ENCODE measurements at regions of chr11 and their contacts with region 1.

Region 1: DNA sequence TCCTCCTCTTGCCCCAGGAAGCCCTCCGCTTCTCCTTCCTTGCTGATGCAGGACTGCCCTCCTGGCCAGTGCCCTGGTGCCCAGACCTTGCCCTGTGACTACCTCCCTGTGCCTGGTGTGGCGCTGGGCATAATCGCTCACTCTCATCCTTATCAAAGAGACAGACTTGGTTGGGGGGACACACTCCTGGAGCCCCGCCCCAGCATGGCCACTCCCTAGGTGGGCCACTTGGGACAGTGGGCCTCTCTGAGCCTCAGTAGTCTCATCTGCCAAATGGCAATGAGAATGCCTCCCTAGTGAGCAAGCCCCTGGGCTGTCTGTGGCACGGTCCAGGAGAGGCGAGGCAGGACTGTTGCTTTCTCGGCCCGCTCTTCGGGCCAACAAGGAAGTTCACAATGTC is 72.7 kb upstream of the TSPAN18 start:
- DNase-seq: no peak
- ATAC-seq: no peak
- H3K4me3 ChIP-seq: no peak overlapping the region
- H3K27ac ChIP-seq: no peak overlapping the region
- H3K4me1 ChIP-seq: no peaks in the 10 kb centered on the region
- H3K27me3 ChIP-seq: peaks cover 11% of the 10 kb centered on the region
- CTCF ChIP-seq: no peak

Region 2: DNA sequence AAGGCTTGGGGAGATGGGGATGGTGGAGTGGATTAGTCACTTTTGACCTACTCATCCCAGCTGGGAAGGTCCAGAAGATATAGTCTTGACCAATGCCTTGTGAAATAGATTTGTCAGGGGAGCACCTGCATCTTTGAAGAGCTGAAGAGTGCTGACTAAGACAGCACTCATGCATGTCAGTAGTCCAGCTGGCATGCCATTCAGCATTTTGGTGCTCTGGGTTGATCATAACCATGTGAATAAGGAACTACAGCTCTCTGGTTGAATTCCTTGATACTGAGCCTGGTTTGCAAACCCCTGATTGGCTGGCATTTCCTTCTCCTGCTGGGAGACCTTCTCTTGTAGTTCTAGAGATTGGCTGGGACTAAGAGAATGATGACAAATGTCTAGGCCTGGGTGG is 237.3 kb before region 1 on chr11:
- CTCF ChIA-PET with region 1: no interaction called
- POLR2A ChIA-PET with region 1: no interaction called
- in situ Hi-C with region 1: no loop called
- intact Hi-C with region 1: no loop called
- DNase-seq: no peak
- ATAC-seq: no peak
- H3K4me3 ChIP-seq: no peak overlapping the region
- H3K27ac ChIP-seq: no peak overlapping the region
- H3K4me1 ChIP-seq: no peaks in the 10 kb centered on the region
- H3K27me3 ChIP-seq: peaks cover 6% of the 10 kb centered on the region; the same call in 1 of the 2 replicates
- CTCF ChIP-seq: no peak

Region 3: DNA sequence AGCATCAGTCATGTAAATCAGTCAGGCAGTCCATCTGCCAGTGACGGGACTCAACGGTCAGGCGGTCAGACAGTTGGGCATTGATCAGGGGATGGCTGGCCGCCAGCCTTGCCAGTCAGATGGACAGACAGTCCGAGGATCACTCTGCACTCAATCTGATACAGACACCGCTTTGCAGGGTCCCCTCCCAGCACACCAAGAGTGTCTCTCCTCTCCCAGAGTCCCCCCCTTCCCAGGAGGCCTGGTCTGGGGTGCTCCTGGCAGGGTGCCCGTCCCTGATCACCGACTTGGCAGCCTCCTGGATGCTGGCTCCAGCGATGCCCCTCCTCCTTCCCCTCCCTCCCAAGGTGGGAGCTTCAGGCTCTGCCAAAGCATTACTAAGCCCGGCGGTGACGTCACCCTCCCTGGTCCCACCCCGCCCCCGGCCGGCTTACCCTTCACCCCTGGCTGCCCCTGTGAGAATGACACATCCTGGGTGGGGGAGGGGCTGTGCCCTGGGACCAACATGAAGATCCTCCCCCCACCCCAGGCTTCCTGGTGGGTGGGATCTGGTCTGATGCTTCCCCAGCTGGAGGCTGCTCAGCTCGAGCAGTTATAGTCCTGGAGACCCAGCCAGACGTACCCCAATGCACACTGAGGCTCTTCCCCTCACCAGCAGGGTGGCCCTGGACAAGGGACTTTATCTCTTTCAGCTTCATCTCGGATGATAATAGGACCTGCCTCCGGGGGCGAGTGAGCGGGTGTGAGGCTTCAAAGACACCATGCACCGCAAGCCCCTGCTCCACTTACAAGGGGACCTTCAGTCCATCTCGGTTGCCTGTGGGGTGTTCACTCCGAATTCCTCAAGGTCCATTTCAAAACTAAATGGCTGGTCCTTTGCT is 19.4 kb before region 1 on chr11:
- CTCF ChIA-PET with region 1: interaction called, 12 read pairs
- POLR2A ChIA-PET with region 1: no interaction called
- in situ Hi-C with region 1: no loop called
- intact Hi-C with region 1: no loop called
- DNase-seq: no peak
- ATAC-seq: no peak; the same call in 1 of the 2 replicates
- H3K4me3 ChIP-seq: no peak overlapping the region
- H3K27ac ChIP-seq: no peak overlapping the region
- H3K4me1 ChIP-seq: peaks cover 4% of the 10 kb centered on the region; the same call in 1 of the 2 replicates
- H3K27me3 ChIP-seq: peaks cover 13% of the 10 kb centered on the region
- CTCF ChIP-seq: no peak

Region 4: DNA sequence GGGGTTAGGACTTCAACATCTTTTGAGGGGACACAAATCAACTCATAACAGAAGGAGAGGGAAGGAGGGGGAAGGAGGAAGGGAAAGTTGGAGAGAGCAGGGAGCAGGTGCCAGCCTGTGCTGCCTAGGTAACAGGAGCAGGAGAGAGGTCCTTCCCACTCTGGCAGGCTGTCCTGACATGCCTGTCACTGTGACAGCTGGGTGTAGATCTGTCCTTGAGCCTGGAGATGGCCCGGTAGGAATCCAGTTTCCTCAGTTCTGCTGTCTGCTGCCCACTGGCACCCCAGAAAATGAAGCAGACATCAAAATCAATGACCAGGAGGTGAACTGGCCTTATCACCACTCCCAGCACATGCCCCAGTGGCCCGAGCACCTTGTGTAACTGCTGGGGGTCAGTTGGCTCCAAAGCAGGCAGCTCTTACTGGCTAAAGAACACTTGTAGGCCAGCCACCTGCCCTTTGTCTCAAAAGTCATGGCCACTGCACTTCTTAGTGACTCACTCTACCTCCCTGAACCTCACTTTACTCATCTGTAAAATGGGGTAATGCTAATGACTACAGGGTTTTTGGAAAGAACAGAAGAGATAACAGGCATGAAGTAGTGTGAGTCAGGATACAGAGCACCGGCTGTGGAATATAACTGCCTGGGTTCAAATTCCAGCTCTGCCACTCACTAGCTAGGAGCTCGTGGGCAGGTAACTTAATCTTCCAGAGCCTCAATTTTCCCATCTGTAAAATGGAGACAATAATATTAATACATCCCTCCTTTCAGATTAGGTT is 64.7 kb after region 1 on chr11:
- CTCF ChIA-PET with region 1: no interaction called
- POLR2A ChIA-PET with region 1: no interaction called
- in situ Hi-C with region 1: no loop called
- intact Hi-C with region 1: no loop called
- DNase-seq: no peak
- ATAC-seq: no peak
- H3K4me3 ChIP-seq: no peak overlapping the region
- H3K27ac ChIP-seq: no peak overlapping the region
- H3K4me1 ChIP-seq: no peaks in the 10 kb centered on the region
- H3K27me3 ChIP-seq: no peaks in the 10 kb centered on the region; the same call in 1 of the 2 replicates
- CTCF ChIP-seq: no peak